HEK293 (cell line): ENCODE measurements at regions of chr2 and their contacts with region 1.

Region 1: GRCh38 chr2:6896930-6897759 is 19.6 kb downstream of the RSAD2 start:
- H3K4me3 ChIP-seq: no peak overlapping the region
- H3K27ac ChIP-seq: no peak overlapping the region
- H3K4me1 ChIP-seq: no peaks in the 10 kb centered on the region
- CTCF ChIP-seq: no peak

Region 2: DNA sequence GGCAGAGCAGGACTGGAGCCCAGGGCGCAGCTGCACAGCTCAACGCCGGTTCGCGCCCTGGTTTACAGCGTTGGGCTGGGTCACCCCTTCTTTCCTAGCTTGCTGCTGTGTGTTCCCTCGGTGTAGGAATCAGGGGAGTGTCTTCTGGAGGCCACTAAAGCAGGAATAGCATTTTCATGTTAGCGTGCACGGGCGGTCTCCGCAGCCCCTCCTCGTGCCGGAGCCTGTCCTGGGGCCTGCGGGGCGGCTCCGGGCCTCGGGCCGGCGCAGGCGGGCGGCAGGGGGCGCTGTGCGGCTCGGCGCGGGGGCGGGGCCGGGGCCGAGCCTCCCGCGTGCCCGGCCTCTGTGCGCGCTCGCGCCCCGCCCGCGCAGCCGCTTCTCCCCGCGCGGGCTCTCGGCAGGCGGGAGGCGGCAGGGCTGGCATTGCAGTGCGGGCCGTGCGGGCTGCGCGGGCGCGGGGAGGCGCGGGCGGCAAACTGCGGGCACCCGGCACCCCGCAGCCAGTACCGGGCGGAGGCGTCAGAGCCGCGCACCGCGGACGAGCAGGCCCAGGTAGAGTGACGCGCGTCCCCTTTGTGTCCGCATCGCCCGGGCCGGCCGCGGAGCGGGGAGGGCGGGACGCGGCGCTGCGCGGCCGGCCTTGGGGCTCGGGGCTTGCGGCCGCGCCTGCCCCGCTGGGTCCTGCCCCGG is 20.1 kb after region 1 on chr2 and contains the start of gene RNF144A:
- CTCF ChIA-PET with region 1: interaction called, 12 read pairs
- POLR2A ChIA-PET with region 1: no interaction called
- H3K4me3 ChIP-seq: peak within 1 kb of the TSS; percentile 61
- H3K27ac ChIP-seq: peak within 1 kb of the TSS; percentile 64; the same call in 1 of the 2 replicates
- H3K4me1 ChIP-seq: no peaks in the 10 kb centered on the region
- CTCF ChIP-seq: no peak

Region 3: DNA sequence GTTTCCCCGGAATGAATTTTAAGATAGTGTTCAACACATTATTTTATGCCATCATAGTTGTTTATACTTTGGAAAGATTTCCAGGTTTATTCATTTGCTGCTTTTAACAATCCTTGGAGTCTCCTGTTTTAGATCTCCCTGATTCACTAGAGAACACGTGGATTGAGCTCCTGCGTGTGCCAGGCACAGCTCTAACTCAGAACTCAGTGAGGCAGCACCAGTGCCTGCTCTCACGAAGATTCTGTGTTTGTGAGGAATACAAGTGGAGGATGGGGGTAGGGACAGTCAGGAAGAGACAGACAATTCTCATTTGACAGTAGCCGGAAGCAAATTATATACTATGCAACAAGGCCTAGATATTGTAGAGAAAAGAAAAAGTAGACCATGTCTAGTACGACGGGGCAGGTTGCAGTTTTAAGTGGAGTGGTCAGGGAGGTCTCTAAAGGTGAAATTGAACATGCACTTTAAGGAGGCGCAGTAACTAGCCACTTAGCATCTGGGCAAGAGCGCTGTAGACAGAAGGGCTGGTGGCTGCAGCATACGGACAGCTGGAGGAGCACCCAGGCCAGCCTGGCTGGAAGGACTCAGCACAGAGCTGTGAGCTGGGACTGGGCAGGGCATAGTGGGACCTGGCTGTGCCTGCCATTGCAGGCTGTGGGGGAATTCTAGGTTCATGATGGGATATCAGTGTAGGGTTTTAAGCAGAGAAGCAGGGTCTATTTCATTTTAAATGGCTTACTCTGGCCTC is 44.3 kb after region 1 on chr2:
- CTCF ChIA-PET with region 1: no interaction called
- POLR2A ChIA-PET with region 1: no interaction called
- H3K4me3 ChIP-seq: no peak overlapping the region
- H3K27ac ChIP-seq: no peak overlapping the region
- H3K4me1 ChIP-seq: no peaks in the 10 kb centered on the region
- CTCF ChIP-seq: no peak

Region 4: DNA sequence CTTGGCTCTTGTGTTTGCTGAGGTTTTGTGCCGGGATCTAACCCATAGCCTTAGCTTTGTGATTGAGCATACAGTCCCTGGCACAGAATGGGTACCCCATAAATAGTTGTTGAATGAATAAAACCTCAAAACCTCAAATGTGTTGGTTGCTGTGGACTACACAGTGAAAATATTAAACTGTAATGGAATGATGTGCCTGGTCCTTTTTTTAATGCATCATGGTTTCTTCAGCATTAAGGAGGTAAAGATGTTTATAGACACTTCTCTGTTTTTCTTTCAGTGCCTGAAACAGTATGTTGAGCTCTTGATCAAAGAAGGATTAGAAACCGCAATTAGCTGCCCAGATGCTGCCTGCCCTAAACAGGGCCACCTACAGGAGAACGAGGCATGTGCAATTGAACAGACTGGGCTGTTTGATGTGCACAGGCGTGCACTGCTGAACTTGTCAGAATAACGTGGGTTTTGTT is 117.1 kb after region 1 on chr2:
- CTCF ChIA-PET with region 1: interaction called, 11 read pairs
- POLR2A ChIA-PET with region 1: no interaction called
- H3K4me3 ChIP-seq: no peak overlapping the region
- H3K27ac ChIP-seq: no peak overlapping the region
- H3K4me1 ChIP-seq: 0 out of 2 replicates have a peak, but pooled peaks cover 5% of the 10 kb centered on the region
- CTCF ChIP-seq: 0 out of 2 replicates have a peak, but pooled peaks have one; percentile 13